ENCODE measurements at regions of chr5 and their contacts with region 1.

Region 1: GRCh38 chr5:179643556-179643955 is 20.1 kb upstream of the HNRNPH1 start:
- DNase-seq: peak in 2 of 4 experiments; percentile 6 to 10
- ATAC-seq: no peak
- H3K4me3 ChIP-seq: no peak overlapping the region
- H3K27ac ChIP-seq: no peak overlapping the region
- H3K4me1 ChIP-seq: no peaks in the 10 kb centered on the region; a peak in 1 of 5 replicates
- H3K27me3 ChIP-seq: peaks cover 5 to 13% of the 10 kb centered on the region in 2 experiments
- CTCF ChIP-seq: no peak
- EP300 ChIP-seq: no peak
- POLR2A ChIP-seq: no peak
- RAD21 ChIP-seq: no peak

Region 2: DNA sequence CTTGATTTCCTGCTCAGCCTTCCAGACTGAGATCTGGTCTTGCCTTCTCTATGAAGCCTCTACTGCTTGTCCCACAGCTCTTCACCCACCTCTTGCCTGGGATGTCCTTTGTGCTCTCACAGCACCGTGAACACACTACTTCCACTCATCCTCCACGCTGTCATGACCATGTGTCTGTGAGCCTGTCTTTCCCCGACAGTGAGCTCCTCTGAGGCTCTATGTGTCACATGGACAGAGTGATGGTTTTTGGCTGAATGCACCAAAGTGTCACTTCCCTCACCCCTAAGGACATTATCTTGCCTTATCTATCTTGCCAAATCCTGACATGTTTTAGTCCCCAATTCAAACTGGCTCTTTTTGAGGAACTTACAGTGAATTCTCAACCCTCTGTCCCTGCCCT is 1422.3 kb before region 1 on chr5:
- CTCF ChIA-PET with region 1: no interaction called
- POLR2A ChIA-PET with region 1: no interaction called
- in situ Hi-C with region 1: no loop called
- intact Hi-C with region 1: no loop called
- DNase-seq: no peak
- ATAC-seq: peak; percentile 7; the same call in 2 of the 3 replicates
- H3K4me3 ChIP-seq: no peak overlapping the region
- H3K27ac ChIP-seq: no peak overlapping the region
- H3K4me1 ChIP-seq: peaks cover 7 to 20% of the 10 kb centered on the region in 2 experiments; a peak in 3 of 5 replicates
- H3K27me3 ChIP-seq: no peaks in the 10 kb centered on the region
- CTCF ChIP-seq: no peak
- EP300 ChIP-seq: no peak
- POLR2A ChIP-seq: peak; percentile 46
- RAD21 ChIP-seq: no peak

Region 3: GRCh38 chr5:179404321-179405053 is 239.1 kb before region 1 on chr5:
- CTCF ChIA-PET with region 1: no interaction called
- POLR2A ChIA-PET with region 1: no interaction called
- in situ Hi-C with region 1: no loop called
- intact Hi-C with region 1: no loop called
- DNase-seq: no peak
- ATAC-seq: peak; percentile 37; the same call in 1 of the 3 replicates
- H3K4me3 ChIP-seq: no peak overlapping the region
- H3K27ac ChIP-seq: no peak overlapping the region
- H3K4me1 ChIP-seq: no peaks in the 10 kb centered on the region
- H3K27me3 ChIP-seq: peaks cover 5 to 35% of the 10 kb centered on the region in 2 experiments; a peak in 3 of 5 replicates
- CTCF ChIP-seq: 0 out of 6 replicates have a peak, but pooled peaks of 2 of the 3 experiments have one; percentile 11 to 28
- EP300 ChIP-seq: no peak
- POLR2A ChIP-seq: no peak
- RAD21 ChIP-seq: peak in 1 of 2 experiments; percentile 24; a peak in 2 of 4 replicates

Region 4: DNA sequence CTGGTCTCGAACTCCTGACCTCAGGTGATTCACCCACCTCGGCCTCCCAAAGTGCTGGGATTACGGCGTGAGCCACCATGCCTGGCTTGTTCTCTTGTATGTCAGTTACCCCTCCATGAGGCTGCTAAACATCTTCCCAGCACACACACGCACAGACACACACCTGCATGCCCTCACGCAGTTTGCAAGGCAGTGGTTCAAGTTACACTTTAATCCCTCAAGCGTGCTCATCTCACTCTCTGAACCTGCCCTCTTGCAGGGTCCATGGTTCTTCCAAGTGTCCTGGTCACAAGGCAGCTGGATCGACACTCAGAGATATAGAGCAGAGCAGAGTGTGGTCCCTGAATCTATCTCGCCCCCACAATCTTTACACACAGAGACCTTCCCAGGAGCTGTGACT is 127.3 kb before region 1 on chr5:
- CTCF ChIA-PET with region 1: no interaction called
- POLR2A ChIA-PET with region 1: no interaction called
- in situ Hi-C with region 1: loop called (anchors 5 kb)
- intact Hi-C with region 1: loop called (anchors 2 kb)
- DNase-seq: no peak
- ATAC-seq: no peak
- H3K4me3 ChIP-seq: no peak overlapping the region
- H3K27ac ChIP-seq: no peak overlapping the region
- H3K4me1 ChIP-seq: no peaks in the 10 kb centered on the region
- H3K27me3 ChIP-seq: peaks cover 8 to 15% of the 10 kb centered on the region in 2 experiments; a peak in 4 of 5 replicates
- CTCF ChIP-seq: no peak
- EP300 ChIP-seq: no peak
- POLR2A ChIP-seq: no peak
- RAD21 ChIP-seq: no peak

Region 5: DNA sequence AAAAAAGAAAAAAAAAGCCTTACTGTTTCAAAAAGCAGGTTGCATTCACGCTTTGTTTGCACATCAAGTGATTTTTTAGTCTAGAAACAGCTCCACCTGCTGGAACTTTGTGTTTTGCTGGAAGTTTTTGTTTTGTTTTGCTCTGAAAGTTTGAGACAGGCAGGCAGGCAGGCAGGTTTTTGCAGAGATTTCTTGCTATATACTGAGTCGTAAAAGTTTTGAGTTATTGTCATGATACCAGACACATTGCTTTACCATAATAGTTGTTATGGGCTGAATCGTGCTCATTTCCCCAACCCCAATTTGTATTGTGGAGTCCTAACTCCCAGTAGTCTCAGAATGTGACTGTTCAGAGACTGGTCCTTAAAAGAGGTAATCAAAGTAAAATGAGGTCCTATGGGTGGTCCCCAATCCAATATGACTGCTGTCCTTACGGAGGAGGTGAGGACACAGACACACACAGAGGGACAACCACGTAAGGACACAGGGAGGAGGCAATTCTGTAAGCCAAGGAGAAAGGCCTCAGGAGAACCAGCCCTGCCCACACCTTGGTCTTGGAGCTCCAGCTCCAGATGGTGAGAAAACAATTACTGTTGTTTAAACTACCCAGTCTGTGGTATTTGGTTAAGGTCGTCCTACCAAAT is 1075.4 kb after region 1 on chr5:
- CTCF ChIA-PET with region 1: no interaction called
- POLR2A ChIA-PET with region 1: no interaction called
- in situ Hi-C with region 1: no loop called
- intact Hi-C with region 1: no loop called
- DNase-seq: peak; percentile 22 to 50 (median 32)
- ATAC-seq: peak; percentile 61
- H3K4me3 ChIP-seq: no peak overlapping the region
- H3K27ac ChIP-seq: no peak overlapping the region
- H3K4me1 ChIP-seq: no peaks in the 10 kb centered on the region; a peak in 1 of 5 replicates
- H3K27me3 ChIP-seq: peaks cover 11 to 12% of the 10 kb centered on the region in 2 experiments
- CTCF ChIP-seq: peak; percentile 59 to 72 (median 67); a peak in 5 of 6 replicates
- EP300 ChIP-seq: no peak
- POLR2A ChIP-seq: no peak
- RAD21 ChIP-seq: peak; percentile 29 to 61; a peak in 3 of 4 replicates

Measured in K562 (cell line).